Heart left ventricle (tissue), 16 donors: ENCODE measurements at regions of chr1 and their contacts with region 1.

Region 1: GRCh38 chr1:64898107-64898845 is 68.1 kb downstream of the JAK1 start:
- DNase-seq: peak; percentile 81 to 93 (median 87)
- ATAC-seq: peak; percentile 95 to 98 (median 98)
- H3K4me3 ChIP-seq: no peak overlapping the region
- H3K27ac ChIP-seq: peak overlapping the region; percentile 67 to 87 (median 81)
- H3K4me1 ChIP-seq: peaks cover 5 to 87% (median 37%) of the 10 kb centered on the region in 12 donors
- H3K27me3 ChIP-seq: no peaks in the 10 kb centered on the region
- CTCF ChIP-seq: no peak
- POLR2A ChIP-seq: no peak

Region 2: DNA sequence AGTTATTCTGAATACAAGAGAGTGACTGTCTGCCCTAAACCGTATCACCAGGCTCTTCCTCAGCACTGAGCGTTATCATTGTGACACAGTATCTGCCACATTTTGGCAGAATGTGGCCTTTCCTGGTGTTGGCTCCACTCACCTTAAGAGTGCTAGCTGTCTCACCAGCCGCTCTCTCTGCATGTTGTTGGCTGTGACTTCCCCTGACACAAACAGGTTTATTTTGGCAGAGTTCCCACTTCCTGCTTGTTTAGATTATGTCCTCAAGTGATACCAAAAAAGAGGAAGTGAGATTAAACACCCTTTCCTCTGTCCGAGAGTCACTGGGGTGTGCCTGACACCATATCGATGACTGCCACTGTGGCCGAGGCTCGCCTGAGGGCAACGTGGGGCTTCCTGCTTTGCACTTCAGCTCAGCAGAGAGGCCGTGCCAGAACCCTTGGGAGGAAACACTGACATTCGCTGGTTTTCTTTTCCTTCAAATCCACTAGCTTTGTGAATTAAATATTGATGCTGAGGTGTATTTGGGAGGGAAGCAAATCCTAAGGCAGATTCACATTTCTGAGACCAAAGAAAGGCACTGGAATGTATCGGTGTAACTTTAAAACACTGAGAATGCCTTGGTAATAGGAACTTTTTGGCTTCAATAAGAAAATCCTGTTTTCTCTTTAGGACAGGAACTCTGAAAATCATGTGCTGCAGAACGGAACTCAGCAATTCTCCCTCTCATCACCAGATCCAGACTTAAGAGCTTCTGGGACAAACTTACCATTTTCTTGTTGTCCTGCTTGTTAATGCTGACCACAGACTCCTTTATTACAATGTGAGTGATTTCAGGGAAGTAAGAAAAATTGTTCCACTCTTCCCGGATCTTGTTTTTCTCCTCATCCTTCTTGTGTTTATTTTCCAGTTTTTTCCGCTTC is 34.0 kb before region 1 on chr1:
- intact Hi-C with region 1: no loop called
- DNase-seq: peak; percentile 63 to 88 (median 77)
- ATAC-seq: peak; percentile 45 to 94 (median 85)
- H3K4me3 ChIP-seq: no peak overlapping the region
- H3K27ac ChIP-seq: peak overlapping the region in 9 of 12 donors; percentile 17 to 85 (median 39)
- H3K4me1 ChIP-seq: peaks cover 0 to 28% (median 5%) of the 10 kb centered on the region in 12 donors
- H3K27me3 ChIP-seq: no peaks in the 10 kb centered on the region
- CTCF ChIP-seq: no peak
- POLR2A ChIP-seq: no peak

Region 3: GRCh38 chr1:64909031-64909430 is 10.8 kb after region 1 on chr1:
- intact Hi-C with region 1: loop called in 1 of 10 experiments (anchors 1 kb)
- DNase-seq: no peak
- ATAC-seq: peak in 1 of 4 donors; percentile 41
- H3K4me3 ChIP-seq: no peak overlapping the region
- H3K27ac ChIP-seq: no peak overlapping the region
- H3K4me1 ChIP-seq: peaks cover 0 to 72% (median 32%) of the 10 kb centered on the region in 12 donors
- H3K27me3 ChIP-seq: no peaks in the 10 kb centered on the region
- CTCF ChIP-seq: no peak
- POLR2A ChIP-seq: no peak

Region 4: DNA sequence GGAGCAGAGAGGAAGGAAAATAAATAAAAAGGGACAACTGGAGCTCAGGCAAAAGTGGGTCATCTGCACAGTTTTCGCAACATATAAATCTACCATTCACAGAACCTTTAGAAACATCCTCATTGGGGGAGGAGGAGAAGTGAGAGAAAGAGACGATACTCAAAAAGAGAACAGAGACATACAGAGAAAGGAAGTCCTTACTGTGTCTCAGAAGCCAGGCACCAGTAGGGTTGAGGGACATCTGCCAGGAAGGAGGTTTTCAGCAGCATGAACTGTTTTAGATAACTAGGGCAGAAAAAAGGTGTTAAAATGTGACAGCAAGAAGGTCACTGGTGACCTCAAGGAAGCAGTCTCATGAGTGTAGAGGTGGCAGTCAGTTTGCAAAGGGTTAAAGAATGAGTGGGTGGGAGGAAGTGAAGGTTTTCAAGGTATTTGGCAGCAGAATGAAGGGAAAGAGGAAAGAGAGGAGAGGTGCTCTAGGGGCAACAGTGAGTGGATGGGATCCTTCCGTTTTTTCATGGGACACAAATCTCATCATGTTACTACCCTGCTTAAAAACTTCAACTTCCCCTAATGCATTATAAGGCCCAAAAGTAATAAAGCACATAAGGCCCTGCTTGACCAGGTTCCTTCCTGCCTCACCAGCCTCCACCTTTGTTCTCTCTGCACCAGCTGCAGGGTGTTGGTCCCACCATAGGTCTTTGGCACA is 58.6 kb after region 1 on chr1:
- intact Hi-C with region 1: loop called in 5 of 10 experiments (anchors 5 to 10 kb)
- DNase-seq: no peak
- ATAC-seq: peak in 3 of 4 donors; percentile 14 to 39 (median 17)
- H3K4me3 ChIP-seq: no peak overlapping the region
- H3K27ac ChIP-seq: peak overlapping the region in 5 of 12 donors; percentile 2 to 85 (median 67)
- H3K4me1 ChIP-seq: peaks cover 0 to 99% (median 56%) of the 10 kb centered on the region in 12 donors
- H3K27me3 ChIP-seq: no peaks in the 10 kb centered on the region
- CTCF ChIP-seq: no peak
- POLR2A ChIP-seq: no peak

Region 5: DNA sequence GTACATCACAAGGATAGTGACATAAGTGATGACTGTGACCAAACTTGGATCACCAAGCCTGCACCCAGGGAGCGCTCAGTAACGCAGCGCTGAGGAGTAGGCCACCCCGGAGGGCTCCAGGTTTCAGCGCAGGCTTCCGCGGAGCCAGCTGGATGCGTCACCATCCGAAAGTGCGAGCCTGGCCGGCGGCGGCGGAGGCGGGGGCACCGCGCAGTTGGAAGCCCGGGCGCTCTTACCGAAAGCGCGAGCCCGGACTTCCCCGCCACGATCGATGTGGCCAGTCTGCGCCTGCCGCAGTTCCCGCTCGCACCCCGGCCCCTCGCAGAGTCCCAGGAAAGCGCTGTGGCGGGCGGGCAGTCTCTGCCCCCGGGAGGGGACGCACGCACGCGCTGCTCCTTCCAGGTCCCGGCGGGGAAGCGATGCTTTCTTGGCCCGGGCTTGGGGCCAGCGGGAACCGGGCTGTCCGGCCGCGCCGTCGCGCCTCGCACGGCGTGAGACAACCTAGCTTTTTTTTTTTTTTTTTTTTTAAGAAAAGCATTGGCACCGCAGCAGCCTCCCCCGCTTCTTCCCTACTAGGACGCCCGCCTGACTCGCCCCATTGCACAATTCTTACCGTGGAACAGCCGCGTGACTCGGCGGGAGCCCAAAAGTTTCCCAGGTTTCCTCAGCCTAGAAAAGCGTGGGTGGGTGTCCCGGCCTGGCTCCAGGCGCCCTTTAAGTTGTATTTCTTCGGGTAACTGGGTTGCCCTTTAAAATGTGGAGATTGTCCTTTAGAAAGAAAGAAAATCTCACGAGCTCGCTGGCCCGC is 104.4 kb after region 1 on chr1:
- intact Hi-C with region 1: no loop called
- DNase-seq: peak; percentile 79 to 91 (median 88)
- ATAC-seq: peak; percentile 56 to 93 (median 86)
- H3K4me3 ChIP-seq: peak overlapping the region; percentile 27 to 82 (median 67)
- H3K27ac ChIP-seq: peak overlapping the region; percentile 78 to 98 (median 92)
- H3K4me1 ChIP-seq: peaks cover 4 to 31% (median 16%) of the 10 kb centered on the region in 12 donors
- H3K27me3 ChIP-seq: no peaks in the 10 kb centered on the region
- CTCF ChIP-seq: peak in 1 of 12 donors; percentile 5
- POLR2A ChIP-seq: peak in 1 of 2 donors; percentile 42